ENCODE measurements at regions of chr11 and their contacts with region 1.

Region 1: DNA sequence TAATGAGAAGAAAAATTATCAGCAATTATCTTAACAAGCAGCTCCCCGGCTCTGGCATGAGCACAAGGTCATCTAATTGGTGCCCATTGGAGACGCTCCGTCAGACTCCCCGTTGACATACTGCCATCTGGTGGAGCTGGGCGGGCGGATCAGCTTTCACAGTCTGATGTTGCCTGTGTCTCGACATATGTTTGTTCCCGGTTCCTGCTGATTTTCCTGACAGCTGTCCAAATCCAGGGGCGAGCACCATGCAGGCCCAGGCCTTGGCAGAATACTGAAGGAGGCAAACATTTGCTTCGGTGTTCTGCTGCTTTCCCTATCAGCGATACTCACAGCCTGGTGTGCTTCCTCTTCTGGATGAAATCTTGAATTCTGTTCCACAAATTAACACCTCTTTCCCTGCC is 43.8 kb upstream of the BARX2 start:
- DNase-seq: peak; percentile 90
- ATAC-seq: peak; percentile 97
- H3K4me3 Mint-ChIP-seq: no peak overlapping the region
- H3K27ac Mint-ChIP-seq: no peak overlapping the region
- H3K4me1 Mint-ChIP-seq: peaks cover 9% of the 10 kb centered on the region
- H3K27me3 Mint-ChIP-seq: no peaks in the 10 kb centered on the region
- CTCF ChIP-seq: peak; percentile 52

Region 2: GRCh38 chr11:129117595-129118350 is 214.1 kb before region 1 on chr11:
- CTCF ChIA-PET with region 1: interaction called, 21 read pairs
- POLR2A ChIA-PET with region 1: no interaction called
- DNase-seq: peak; percentile 19
- ATAC-seq: peak; percentile 43; the same call in 1 of the 2 replicates
- H3K4me3 Mint-ChIP-seq: no peak overlapping the region
- H3K27ac Mint-ChIP-seq: no peak overlapping the region
- H3K4me1 Mint-ChIP-seq: no peaks in the 10 kb centered on the region
- H3K27me3 Mint-ChIP-seq: no peaks in the 10 kb centered on the region
- CTCF ChIP-seq: peak; percentile 56

Region 3: DNA sequence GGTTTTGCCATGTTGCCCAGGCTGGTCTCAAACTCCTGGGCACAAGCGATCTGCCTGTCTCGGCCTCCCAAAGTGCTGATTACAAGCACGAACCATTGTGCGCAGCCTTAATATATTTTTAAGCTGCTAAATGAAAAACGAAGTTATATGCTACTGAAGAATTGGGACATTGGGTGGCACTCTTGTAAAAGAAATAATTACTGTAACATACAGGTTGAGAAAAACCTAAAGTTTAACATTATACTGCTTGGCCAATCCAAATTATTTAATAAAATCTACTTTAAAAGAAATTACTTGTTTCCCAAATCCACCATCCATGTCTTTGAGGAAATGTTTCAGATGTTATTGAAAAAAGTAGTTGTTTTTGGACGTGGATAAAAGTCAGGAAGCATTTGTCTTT is 101.9 kb before region 1 on chr11:
- CTCF ChIA-PET with region 1: interaction called, 13 read pairs
- POLR2A ChIA-PET with region 1: no interaction called
- DNase-seq: no peak
- ATAC-seq: no peak
- H3K4me3 Mint-ChIP-seq: no peak overlapping the region
- H3K27ac Mint-ChIP-seq: no peak overlapping the region
- H3K4me1 Mint-ChIP-seq: peaks cover 2% of the 10 kb centered on the region; the same call in 1 of the 2 replicates
- H3K27me3 Mint-ChIP-seq: no peaks in the 10 kb centered on the region; the same call in 1 of the 2 replicates
- CTCF ChIP-seq: no peak

Region 4: DNA sequence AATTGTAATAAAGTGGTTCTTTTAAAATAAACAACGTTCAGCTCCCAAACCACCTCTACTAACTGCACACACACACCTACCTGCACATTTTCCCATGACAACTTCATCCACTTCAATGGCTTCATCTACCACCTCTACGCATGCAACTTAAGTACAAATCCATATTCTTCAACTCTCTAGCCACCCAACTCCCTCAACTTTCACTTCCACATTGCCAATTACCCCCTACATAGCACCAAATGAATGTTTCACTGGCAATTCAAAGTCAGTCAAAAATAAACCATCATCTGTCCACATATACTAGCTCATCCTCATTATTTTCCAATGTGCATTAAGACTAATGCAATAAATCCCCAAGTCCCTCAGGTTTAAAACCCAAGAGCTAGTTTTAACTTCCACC is 89.0 kb before region 1 on chr11:
- CTCF ChIA-PET with region 1: no interaction called
- POLR2A ChIA-PET with region 1: no interaction called
- DNase-seq: no peak
- ATAC-seq: no peak
- H3K4me3 Mint-ChIP-seq: no peak overlapping the region
- H3K27ac Mint-ChIP-seq: no peak overlapping the region
- H3K4me1 Mint-ChIP-seq: no peaks in the 10 kb centered on the region
- H3K27me3 Mint-ChIP-seq: no peaks in the 10 kb centered on the region
- CTCF ChIP-seq: no peak

Region 5: DNA sequence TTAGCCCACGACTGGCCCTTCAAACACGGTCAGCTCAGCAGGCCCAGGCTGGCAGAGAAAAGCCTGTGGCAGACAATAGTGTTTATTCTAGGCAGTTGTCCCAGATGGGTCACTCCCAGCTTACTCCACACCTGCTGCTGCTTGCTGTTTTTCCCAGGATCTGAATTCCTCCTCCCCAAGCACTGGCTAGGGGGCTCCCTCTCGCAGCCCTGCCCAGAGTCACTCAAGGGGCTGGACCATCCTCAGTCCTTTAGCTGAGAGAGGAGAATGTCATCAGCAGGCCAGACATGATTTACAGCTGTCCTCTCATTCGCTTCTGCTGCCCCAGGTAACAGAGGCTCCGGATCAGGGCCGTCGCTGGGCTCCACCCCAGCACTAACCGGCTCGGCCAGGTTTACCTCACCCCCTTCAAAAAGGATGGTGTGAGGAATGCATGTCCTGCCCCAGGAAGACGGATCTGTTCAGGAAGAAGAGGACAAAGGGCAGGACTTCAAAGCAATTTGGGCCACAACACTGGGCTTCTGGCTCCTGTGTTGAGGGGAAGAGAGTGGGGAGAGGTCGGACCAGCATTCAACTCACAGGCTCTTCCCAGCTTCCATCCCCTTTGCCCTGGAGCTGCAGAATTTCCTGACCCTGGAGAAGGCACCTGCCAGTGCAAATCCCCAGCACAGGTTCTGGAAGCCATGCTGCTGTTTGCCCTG is 15.9 kb before region 1 on chr11:
- CTCF ChIA-PET with region 1: interaction called, 19 read pairs
- POLR2A ChIA-PET with region 1: no interaction called
- DNase-seq: peak; percentile 51
- ATAC-seq: peak; percentile 72
- H3K4me3 Mint-ChIP-seq: peak overlapping the region; percentile 29; the same call in 1 of the 2 replicates
- H3K27ac Mint-ChIP-seq: peak overlapping the region; percentile 88; the same call in 1 of the 2 replicates
- H3K4me1 Mint-ChIP-seq: peaks cover 73% of the 10 kb centered on the region
- H3K27me3 Mint-ChIP-seq: no peaks in the 10 kb centered on the region
- CTCF ChIP-seq: no peak

Region 6: DNA sequence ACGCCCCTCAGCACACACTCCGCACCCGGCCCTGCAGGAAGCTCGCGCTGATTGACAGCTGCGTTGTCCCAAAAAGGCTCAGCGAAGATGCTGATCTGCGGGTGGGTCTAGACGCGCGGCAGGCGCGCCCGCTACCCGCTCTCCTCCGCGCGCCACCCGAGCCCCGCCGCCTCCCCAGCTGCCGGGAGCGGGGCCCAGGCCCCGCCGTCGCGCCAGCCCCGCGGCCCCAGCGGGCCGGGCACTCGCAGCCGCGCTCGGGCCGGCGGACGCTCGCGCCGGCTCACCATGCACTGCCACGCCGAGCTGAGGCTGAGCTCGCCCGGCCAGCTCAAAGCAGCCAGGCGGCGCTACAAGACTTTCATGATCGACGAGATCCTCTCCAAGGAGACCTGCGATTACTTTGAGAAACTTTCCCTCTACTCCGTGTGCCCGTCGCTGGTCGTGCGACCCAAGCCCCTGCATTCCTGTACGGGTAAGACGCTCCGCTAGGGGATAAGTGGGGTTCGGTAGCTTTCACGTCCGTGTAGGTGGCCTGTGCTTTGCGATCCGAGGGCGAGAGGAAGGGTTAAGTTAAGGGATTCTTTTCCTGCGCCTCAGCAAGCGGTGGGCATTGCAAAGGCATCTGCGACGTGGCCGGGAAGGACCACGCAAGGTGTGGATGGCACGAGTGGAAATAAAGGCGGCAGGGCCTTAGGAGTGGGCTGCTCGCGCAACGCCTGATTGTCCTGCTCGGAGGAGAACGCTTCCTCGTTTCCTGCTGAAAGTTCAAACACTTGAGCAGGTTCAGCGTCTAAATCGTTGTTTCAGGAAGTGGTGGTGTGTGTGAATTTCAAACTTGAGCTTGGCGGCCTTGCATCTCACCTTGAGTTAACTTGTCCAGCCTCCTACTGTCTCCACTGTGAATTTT is 44.1 kb after region 1 on chr11 and contains the start of gene BARX2:
- CTCF ChIA-PET with region 1: interaction called, 11 read pairs
- POLR2A ChIA-PET with region 1: no interaction called
- DNase-seq: peak; percentile 74
- ATAC-seq: peak; percentile 61
- H3K4me3 Mint-ChIP-seq: peak within 1 kb of the TSS; percentile 76
- H3K27ac Mint-ChIP-seq: no peak within 1 kb of the TSS
- H3K4me1 Mint-ChIP-seq: peaks cover 27% of the 10 kb centered on the region
- H3K27me3 Mint-ChIP-seq: peaks cover 88% of the 10 kb centered on the region
- CTCF ChIP-seq: no peak
- total RNA-seq, gene BARX2: not detected in 3 replicates

Region 7: DNA sequence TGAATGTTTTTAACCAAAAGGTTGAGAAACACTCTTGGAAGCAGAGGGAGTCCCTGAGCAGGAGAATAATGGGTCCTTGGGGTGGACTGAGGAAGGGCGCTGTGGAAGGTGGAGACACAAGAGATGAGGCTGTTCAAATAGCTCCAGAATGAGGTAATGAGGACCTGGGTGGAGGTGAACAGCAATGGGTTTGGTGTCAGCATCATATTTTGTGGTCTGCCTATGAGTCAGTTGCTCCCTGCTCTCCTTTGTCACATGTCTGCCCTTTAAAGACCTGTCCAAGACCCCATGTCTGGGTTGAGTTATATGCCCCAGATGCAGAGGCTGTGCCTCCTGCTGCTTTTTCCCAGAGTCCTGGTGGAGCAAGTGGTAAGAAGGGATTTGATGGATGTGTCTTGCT is 157.4 kb after region 1 on chr11:
- CTCF ChIA-PET with region 1: no interaction called
- POLR2A ChIA-PET with region 1: no interaction called
- DNase-seq: no peak
- ATAC-seq: no peak
- H3K4me3 Mint-ChIP-seq: no peak overlapping the region
- H3K27ac Mint-ChIP-seq: no peak overlapping the region
- H3K4me1 Mint-ChIP-seq: no peaks in the 10 kb centered on the region
- H3K27me3 Mint-ChIP-seq: no peaks in the 10 kb centered on the region
- CTCF ChIP-seq: no peak